CD8-positive, alpha-beta T cell (primary cell): ENCODE measurements at regions of chr7 and their contacts with region 1.

Region 1: GRCh38 chr7:43582503-43583423 is at the start of gene STK17A:
- DNase-seq: peak; percentile 90 to 98 (median 94)
- ATAC-seq: peak; percentile 76
- H3K4me3 ChIP-seq: peak within 1 kb of the TSS; percentile 87 to 93
- H3K4me3 Mint-ChIP-seq: peak within 1 kb of the TSS; percentile 99
- H3K27ac ChIP-seq: peak within 1 kb of the TSS; percentile 81 to 97
- H3K27ac Mint-ChIP-seq: peak within 1 kb of the TSS; percentile 99
- H3K4me1 ChIP-seq: peaks cover 11% of the 10 kb centered on the region
- H3K4me1 Mint-ChIP-seq: peaks cover 16% of the 10 kb centered on the region
- H3K27me3 ChIP-seq: no peaks in the 10 kb centered on the region
- H3K27me3 Mint-ChIP-seq: no peaks in the 10 kb centered on the region
- CTCF ChIP-seq: peak; percentile 98
- total RNA-seq, gene STK17A: 301 to 311 TPM

Region 2: DNA sequence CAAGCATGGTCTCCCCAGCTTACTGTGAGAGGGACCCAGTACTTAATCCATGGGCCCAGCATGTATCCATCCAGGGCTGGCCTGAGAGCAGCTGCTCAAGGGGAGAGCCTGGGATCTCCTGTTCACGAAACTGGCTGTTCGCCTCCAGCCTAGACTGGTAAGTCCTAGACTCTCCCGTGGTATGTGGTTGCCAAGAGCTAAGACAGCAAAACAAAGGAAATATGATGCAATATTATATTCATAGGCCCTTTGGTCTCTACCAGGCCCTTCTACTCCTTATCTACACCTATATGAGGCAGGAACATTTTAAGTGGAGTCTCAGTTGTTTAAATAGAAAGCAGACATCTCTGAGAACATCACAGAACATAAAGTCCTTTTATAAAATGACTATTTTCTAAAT is 28.8 kb before region 1 on chr7:
- CTCF ChIA-PET with region 1: interaction called, 13 read pairs
- POLR2A ChIA-PET with region 1: no interaction called
- intact Hi-C with region 1: no loop called
- DNase-seq: peak in 2 of 9 experiments; percentile 7 to 36
- ATAC-seq: peak; percentile 54
- H3K4me3 ChIP-seq: no peak overlapping the region
- H3K4me3 Mint-ChIP-seq: peak overlapping the region; percentile 58
- H3K27ac ChIP-seq: no peak overlapping the region
- H3K27ac Mint-ChIP-seq: no peak overlapping the region
- H3K4me1 ChIP-seq: peaks cover 21% of the 10 kb centered on the region
- H3K4me1 Mint-ChIP-seq: peaks cover 23% of the 10 kb centered on the region
- H3K27me3 ChIP-seq: no peaks in the 10 kb centered on the region
- H3K27me3 Mint-ChIP-seq: peaks cover 8% of the 10 kb centered on the region
- CTCF ChIP-seq: no peak

Region 3: GRCh38 chr7:43612599-43613589 is 30.1 kb after region 1 on chr7:
- CTCF ChIA-PET with region 1: interaction called, 59 read pairs
- POLR2A ChIA-PET with region 1: interaction called, 7 read pairs
- intact Hi-C with region 1: loop called in 1 of 2 experiments (anchors 2 kb)
- DNase-seq: peak in 1 of 9 experiments; percentile 37
- ATAC-seq: peak; percentile 39
- H3K4me3 ChIP-seq: no peak overlapping the region
- H3K4me3 Mint-ChIP-seq: peak overlapping the region; percentile 40
- H3K27ac ChIP-seq: peak overlapping the region in 1 of 2 experiments; percentile 39
- H3K27ac Mint-ChIP-seq: peak overlapping the region; percentile 88
- H3K4me1 ChIP-seq: peaks cover 87% of the 10 kb centered on the region
- H3K4me1 Mint-ChIP-seq: peaks cover 72% of the 10 kb centered on the region
- H3K27me3 ChIP-seq: no peaks in the 10 kb centered on the region
- H3K27me3 Mint-ChIP-seq: no peaks in the 10 kb centered on the region
- CTCF ChIP-seq: no peak

Region 4: GRCh38 chr7:43669286-43670081 is 86.7 kb after region 1 on chr7:
- CTCF ChIA-PET with region 1: interaction called, 20 read pairs
- POLR2A ChIA-PET with region 1: interaction called, 5 read pairs
- intact Hi-C with region 1: loop called in 1 of 2 experiments (anchors 1 kb)
- DNase-seq: peak in 7 of 9 experiments; percentile 34 to 85 (median 61)
- ATAC-seq: peak; percentile 76
- H3K4me3 ChIP-seq: no peak overlapping the region
- H3K4me3 Mint-ChIP-seq: peak overlapping the region; percentile 66
- H3K27ac ChIP-seq: peak overlapping the region; percentile 33 to 56
- H3K27ac Mint-ChIP-seq: peak overlapping the region; percentile 73
- H3K4me1 ChIP-seq: peaks cover 40% of the 10 kb centered on the region
- H3K4me1 Mint-ChIP-seq: peaks cover 76% of the 10 kb centered on the region
- H3K27me3 ChIP-seq: no peaks in the 10 kb centered on the region
- H3K27me3 Mint-ChIP-seq: no peaks in the 10 kb centered on the region
- CTCF ChIP-seq: no peak

Region 5: DNA sequence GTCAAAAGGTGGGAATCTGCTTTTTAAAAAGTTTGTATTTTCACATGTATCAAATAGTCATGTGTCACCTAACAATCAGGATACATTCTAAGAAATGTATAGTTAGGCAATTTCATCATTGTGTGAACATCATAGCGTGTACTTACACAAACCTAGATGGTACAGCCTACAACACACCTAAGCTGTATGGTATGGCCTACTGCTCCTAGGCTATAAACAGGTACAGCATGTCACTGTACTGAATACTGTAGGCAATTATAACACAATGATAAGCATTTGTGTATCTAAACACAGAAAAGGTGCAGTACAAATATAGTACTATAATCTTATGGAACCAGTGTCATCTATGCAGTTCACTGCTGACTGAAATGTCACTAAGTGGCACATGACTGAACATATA is 128.7 kb after region 1 on chr7:
- CTCF ChIA-PET with region 1: interaction called, 99 read pairs
- POLR2A ChIA-PET with region 1: interaction called, 6 read pairs
- intact Hi-C with region 1: no loop called
- DNase-seq: no peak
- ATAC-seq: no peak
- H3K4me3 ChIP-seq: no peak overlapping the region
- H3K4me3 Mint-ChIP-seq: no peak overlapping the region
- H3K27ac ChIP-seq: no peak overlapping the region
- H3K27ac Mint-ChIP-seq: no peak overlapping the region
- H3K4me1 ChIP-seq: no peaks in the 10 kb centered on the region
- H3K4me1 Mint-ChIP-seq: peaks cover 40% of the 10 kb centered on the region
- H3K27me3 ChIP-seq: no peaks in the 10 kb centered on the region
- H3K27me3 Mint-ChIP-seq: no peaks in the 10 kb centered on the region
- CTCF ChIP-seq: no peak

Region 6: GRCh38 chr7:43834463-43835251 is 251.9 kb after region 1 on chr7:
- CTCF ChIA-PET with region 1: interaction called, 71 read pairs
- POLR2A ChIA-PET with region 1: interaction called, 6 read pairs
- intact Hi-C with region 1: loop called (anchors 1 kb)
- DNase-seq: peak in 7 of 9 experiments; percentile 10 to 85 (median 38)
- ATAC-seq: peak; percentile 63
- H3K4me3 ChIP-seq: peak overlapping the region; percentile 49 to 53
- H3K4me3 Mint-ChIP-seq: peak overlapping the region; percentile 85
- H3K27ac ChIP-seq: peak overlapping the region; percentile 35 to 71
- H3K27ac Mint-ChIP-seq: peak overlapping the region; percentile 83
- H3K4me1 ChIP-seq: peaks cover 12% of the 10 kb centered on the region
- H3K4me1 Mint-ChIP-seq: peaks cover 18% of the 10 kb centered on the region
- H3K27me3 ChIP-seq: no peaks in the 10 kb centered on the region
- H3K27me3 Mint-ChIP-seq: no peaks in the 10 kb centered on the region
- CTCF ChIP-seq: no peak